Posterior vena cava (tissue), 2 donors: ENCODE measurements at regions of chr13 and their contacts with region 1.

Region 1: DNA sequence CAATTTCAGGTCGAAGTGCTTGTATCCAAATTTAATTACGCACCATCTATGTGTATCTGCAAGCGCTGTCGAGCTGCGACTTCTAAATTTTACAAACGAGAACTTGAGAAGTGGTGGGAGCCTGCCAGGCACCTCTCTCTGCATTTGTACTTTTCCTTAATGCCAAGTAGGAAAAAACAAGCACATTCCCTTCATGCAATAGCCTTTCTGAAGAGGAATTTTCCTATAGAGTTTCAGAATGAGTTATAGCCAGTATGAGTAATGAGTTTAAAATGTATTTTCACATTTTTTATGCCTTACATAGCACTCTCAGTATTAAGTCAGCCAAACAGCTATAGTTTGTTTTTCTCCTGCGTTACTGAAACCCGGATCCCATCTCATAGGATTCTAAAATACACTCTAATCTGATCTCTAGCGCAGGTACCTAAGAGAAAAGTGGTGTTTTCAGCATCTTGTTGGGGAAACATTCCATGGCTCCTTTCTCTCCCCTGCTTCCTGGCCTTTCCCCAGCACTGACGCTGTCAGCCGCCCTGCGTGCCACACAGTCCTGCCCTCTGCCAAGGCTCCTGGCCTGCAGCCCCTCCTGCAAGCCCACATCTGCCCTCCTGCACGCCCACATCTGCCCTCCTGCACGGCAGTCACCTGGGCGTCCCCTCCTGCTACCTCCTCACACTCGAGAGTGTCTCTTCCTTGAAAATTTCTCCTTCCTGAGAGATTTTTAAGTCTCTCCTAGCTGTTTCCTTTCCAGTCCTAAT is 526.9 kb downstream of the MYO16 start:
- DNase-seq: no peak

Region 2: GRCh38 chr13:109256866-109257760 is 100.8 kb after region 1 on chr13:
- intact Hi-C with region 1: loop called in 1 of 2 experiments (anchors 10 kb)
- DNase-seq: no peak

Region 3: DNA sequence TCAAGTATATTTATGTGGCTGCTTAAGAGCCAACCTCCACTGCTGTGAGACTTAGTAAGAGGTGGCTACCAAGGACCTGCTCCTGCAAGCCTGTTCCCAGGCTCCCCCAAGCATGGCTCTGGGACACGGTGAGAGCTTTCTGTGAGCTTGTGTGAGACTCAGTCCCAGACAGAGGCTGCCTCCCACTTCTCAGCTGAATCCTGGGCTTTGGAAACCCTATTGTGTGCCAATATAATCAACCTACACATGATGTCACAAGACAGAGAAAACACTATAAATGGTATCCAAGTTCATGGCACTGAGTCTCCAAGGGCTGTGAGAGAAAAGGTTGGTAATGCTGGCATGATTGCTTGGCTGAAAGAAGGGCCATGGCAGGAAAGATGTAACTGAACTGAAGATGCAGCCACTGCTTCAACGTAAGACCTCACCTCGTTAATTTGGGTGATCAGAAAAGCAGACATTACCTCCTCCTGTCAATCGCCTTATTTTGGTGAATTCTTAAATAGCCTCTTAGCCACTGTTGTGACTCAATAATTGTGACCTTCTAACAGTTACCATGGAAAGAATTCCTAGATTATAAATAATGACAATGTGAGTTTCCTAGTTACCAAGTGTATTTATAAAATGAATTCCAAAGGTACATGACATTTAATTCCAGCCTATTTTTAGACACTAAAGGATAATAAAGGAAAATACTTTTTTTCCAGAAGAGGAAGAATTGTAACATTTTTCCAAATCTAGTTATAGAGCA is 298.0 kb after region 1 on chr13:
- intact Hi-C with region 1: loop called in 1 of 2 experiments (anchors 10 kb)
- DNase-seq: no peak